Activated T-helper 2 cell treated with anti-CD3 and anti-CD28 coated beads, Interferon-gamma antibody, Interleukin-2, Interleukin-4, amounts not matched to agents 10 μg/mL and 5 μg/mL and 100 μg/mL, durations not matched to agents 14 hours and 24 hours and 36 hours (primary cell): ENCODE measurements at regions of chr1 and their contacts with region 1.

Region 1: GRCh38 chr1:207336559-207337467 is 15.3 kb downstream of the CD55 start:
- DNase-seq: peak; percentile 42
- H3K4me3 Mint-ChIP-seq: peak overlapping the region; percentile 46
- H3K27ac Mint-ChIP-seq: peak overlapping the region; percentile 92
- H3K4me1 Mint-ChIP-seq: peaks cover 59% of the 10 kb centered on the region
- H3K27me3 Mint-ChIP-seq: no peaks in the 10 kb centered on the region

Region 2: DNA sequence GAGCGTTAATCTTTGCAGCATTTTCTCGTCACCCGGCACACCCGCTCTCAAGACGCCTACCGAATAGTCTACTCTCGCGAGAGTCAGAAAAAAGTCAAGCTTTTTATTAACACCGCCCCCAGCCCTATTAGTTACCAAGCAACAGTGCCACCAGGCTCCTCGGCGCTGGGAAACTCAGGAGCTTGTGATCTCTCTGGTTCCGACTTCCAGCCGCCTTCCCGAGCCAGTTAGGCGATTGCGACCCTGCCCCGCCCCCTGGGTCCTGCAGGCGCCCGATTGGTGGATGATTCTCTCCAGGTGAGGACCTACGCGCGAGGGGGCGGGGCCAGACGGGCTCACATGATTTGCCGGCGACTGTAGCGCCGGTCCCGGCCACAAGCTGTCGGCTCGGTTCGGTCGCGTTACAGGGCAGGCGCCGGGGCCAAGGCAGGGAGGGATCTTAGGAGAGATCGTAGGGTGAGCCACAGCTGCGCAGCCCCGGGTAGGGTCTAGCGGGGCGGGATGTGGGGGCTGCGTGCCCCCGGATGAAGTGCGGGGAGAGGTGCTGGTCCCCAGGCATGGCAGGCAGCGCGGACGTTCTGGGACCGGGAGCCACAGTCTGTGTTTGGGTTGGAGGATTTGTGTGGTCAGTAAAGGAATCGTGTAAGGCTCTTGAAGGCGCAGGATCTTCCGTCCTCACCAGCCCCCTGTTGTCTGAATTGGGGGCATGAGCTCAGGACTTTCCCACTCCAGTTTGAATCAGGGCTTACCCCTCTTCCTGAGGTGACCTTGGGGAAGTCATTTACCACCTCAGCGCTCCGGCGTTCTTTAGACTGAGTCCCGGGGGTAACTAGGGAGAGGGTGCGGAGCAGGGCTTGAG is 283.7 kb before region 1 on chr1 and contains the start of gene PFKFB2:
- intact Hi-C with region 1: loop called (anchors 5 kb)
- DNase-seq: peak; percentile 90
- H3K4me3 Mint-ChIP-seq: peak within 1 kb of the TSS; percentile 91
- H3K27ac Mint-ChIP-seq: peak within 1 kb of the TSS; percentile 75
- H3K4me1 Mint-ChIP-seq: peaks cover 30% of the 10 kb centered on the region
- H3K27me3 Mint-ChIP-seq: peaks cover 7% of the 10 kb centered on the region
- total RNA-seq, gene PFKFB2: 1.9 and 2.2 TPM in 2 replicates

Region 3: GRCh38 chr1:207321079-207321789 is 15.6 kb before region 1 on chr1 and contains the start of gene CD55:
- intact Hi-C with region 1: loop called (anchors 1 kb)
- DNase-seq: peak; percentile 99
- H3K4me3 Mint-ChIP-seq: peak within 1 kb of the TSS; percentile 93
- H3K27ac Mint-ChIP-seq: peak within 1 kb of the TSS; percentile 99
- H3K4me1 Mint-ChIP-seq: peaks cover 33% of the 10 kb centered on the region
- H3K27me3 Mint-ChIP-seq: no peaks in the 10 kb centered on the region
- total RNA-seq, gene CD55: 132 and 135 TPM in 2 replicates

Region 4: DNA sequence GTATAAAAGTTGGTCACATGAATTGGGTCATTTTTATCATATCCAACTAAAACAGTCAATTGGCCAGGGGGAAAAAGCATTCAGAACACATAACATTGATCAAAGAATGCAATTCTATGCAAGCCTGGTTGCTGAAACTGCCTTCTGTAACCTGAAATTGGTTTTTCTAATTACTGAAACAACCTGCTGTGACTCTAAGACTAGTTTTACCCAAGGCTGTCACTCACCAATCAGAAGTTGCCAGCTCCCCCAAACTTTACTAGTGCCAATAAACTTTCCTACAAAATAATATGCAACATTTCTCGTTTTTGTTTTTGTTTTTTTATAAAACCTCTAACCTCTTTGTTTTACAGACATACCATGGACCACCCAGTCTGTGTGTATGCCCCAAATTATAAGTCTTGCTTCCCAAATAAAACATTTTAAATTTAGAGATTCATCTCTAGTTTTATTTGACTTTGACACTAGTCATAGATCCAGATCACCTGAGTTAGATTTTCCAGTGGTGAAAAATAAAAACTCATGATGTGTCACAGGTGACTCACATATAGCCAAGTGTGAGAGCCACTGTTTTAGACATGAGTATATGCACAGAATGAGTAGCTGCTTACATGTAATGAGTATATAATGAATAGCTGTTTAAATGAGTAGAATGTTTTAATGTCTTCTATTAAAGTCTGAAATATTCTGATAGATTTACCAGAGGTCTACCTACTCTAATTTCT is 53.1 kb after region 1 on chr1:
- intact Hi-C with region 1: loop called (anchors 1 kb)
- DNase-seq: no peak
- H3K4me3 Mint-ChIP-seq: no peak overlapping the region
- H3K27ac Mint-ChIP-seq: peak overlapping the region; percentile 82
- H3K4me1 Mint-ChIP-seq: peaks cover 8% of the 10 kb centered on the region
- H3K27me3 Mint-ChIP-seq: no peaks in the 10 kb centered on the region

Region 5: GRCh38 chr1:207454046-207454964 is 117.5 kb after region 1 on chr1 and contains the start of gene CR2:
- intact Hi-C with region 1: loop called (anchors 5 kb)
- DNase-seq: no peak
- H3K4me3 Mint-ChIP-seq: peak within 1 kb of the TSS; percentile 37
- H3K27ac Mint-ChIP-seq: no peak within 1 kb of the TSS
- H3K4me1 Mint-ChIP-seq: peaks cover 10% of the 10 kb centered on the region
- H3K27me3 Mint-ChIP-seq: peaks cover 47% of the 10 kb centered on the region
- total RNA-seq, gene CR2: not detected in 2 replicates